Natural killer cell (primary cell): ENCODE measurements at regions of chr5 and their contacts with region 1.

Region 1: GRCh38 chr5:59356813-59357380 is 536.6 kb downstream of the PDE4D start:
- DNase-seq: peak; percentile 19 to 52
- ATAC-seq: peak; percentile 68 to 82 (median 74)
- H3K4me3 ChIP-seq: no peak overlapping the region
- H3K4me3 Mint-ChIP-seq: peak overlapping the region; percentile 85
- H3K27ac ChIP-seq: peak overlapping the region; percentile 93
- H3K27ac Mint-ChIP-seq: peak overlapping the region; percentile 95
- H3K4me1 ChIP-seq: peaks cover 15% of the 10 kb centered on the region
- H3K4me1 Mint-ChIP-seq: peaks cover 54% of the 10 kb centered on the region in 2 donors
- H3K27me3 ChIP-seq: no peaks in the 10 kb centered on the region
- H3K27me3 Mint-ChIP-seq: no peaks in the 10 kb centered on the region
- CTCF ChIP-seq: no peak

Region 2: GRCh38 chr5:59099270-59099994 is 257.5 kb before region 1 on chr5:
- intact Hi-C with region 1: loop called (anchors 1 kb)
- DNase-seq: peak; percentile 42 to 84
- ATAC-seq: peak; percentile 88 to 97 (median 96)
- H3K4me3 ChIP-seq: no peak overlapping the region
- H3K4me3 Mint-ChIP-seq: peak overlapping the region; percentile 63
- H3K27ac ChIP-seq: peak overlapping the region; percentile 86
- H3K27ac Mint-ChIP-seq: peak overlapping the region; percentile 88 to 94
- H3K4me1 ChIP-seq: peaks cover 16% of the 10 kb centered on the region
- H3K4me1 Mint-ChIP-seq: peaks cover 43 to 46% of the 10 kb centered on the region in 2 donors
- H3K27me3 ChIP-seq: no peaks in the 10 kb centered on the region
- H3K27me3 Mint-ChIP-seq: no peaks in the 10 kb centered on the region
- CTCF ChIP-seq: no peak

Region 3: DNA sequence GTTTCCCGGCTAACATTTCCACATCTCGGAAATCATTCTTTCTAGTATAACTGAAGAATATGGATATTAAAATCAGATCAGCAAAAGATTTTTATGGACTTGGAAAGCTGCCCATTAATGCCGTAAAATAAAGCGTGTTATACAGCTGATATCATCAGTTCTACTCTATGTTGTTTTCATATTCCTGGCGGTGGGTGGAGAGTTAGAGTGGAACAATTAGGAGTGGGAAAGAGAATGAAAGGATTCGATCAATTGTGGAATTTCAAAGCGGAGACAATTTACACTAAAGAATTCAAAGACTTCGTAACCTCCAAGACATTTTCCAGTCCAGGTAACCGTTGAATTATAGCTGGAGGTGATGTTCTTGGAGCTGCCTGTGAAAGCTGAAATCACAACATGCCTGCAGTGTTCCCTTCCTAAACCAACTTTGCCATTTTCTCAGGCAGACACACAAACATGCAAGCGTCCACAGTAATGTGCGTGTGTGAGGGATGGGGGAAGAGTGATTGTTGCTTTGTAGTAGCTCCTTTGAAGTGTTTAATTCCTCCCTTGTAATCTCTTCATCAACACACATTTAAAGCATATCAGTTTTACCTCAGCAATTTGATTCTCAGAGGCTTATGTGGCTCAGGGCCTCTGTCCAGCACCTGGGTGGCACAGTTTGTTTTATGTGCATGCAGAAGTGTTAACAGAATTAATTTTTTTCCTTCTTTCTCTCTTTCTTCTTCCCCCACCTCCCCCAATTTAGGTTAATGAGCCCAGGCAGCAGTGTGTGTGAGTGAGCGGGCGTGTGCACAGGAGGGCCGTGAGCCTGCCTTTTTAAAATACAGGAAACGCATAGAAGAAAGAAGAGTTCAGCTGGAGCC is 230.0 kb before region 1 on chr5:
- intact Hi-C with region 1: loop called (anchors 1 kb)
- DNase-seq: peak in 1 of 2 donors; percentile 76
- ATAC-seq: no peak
- H3K4me3 ChIP-seq: peak overlapping the region; percentile 17
- H3K4me3 Mint-ChIP-seq: no peak overlapping the region
- H3K27ac ChIP-seq: peak overlapping the region; percentile 80
- H3K27ac Mint-ChIP-seq: no peak overlapping the region
- H3K4me1 ChIP-seq: peaks cover 26% of the 10 kb centered on the region
- H3K4me1 Mint-ChIP-seq: peaks cover 0 to 5% of the 10 kb centered on the region in 2 donors
- H3K27me3 ChIP-seq: no peaks in the 10 kb centered on the region
- H3K27me3 Mint-ChIP-seq: no peaks in the 10 kb centered on the region
- CTCF ChIP-seq: no peak

Region 4: DNA sequence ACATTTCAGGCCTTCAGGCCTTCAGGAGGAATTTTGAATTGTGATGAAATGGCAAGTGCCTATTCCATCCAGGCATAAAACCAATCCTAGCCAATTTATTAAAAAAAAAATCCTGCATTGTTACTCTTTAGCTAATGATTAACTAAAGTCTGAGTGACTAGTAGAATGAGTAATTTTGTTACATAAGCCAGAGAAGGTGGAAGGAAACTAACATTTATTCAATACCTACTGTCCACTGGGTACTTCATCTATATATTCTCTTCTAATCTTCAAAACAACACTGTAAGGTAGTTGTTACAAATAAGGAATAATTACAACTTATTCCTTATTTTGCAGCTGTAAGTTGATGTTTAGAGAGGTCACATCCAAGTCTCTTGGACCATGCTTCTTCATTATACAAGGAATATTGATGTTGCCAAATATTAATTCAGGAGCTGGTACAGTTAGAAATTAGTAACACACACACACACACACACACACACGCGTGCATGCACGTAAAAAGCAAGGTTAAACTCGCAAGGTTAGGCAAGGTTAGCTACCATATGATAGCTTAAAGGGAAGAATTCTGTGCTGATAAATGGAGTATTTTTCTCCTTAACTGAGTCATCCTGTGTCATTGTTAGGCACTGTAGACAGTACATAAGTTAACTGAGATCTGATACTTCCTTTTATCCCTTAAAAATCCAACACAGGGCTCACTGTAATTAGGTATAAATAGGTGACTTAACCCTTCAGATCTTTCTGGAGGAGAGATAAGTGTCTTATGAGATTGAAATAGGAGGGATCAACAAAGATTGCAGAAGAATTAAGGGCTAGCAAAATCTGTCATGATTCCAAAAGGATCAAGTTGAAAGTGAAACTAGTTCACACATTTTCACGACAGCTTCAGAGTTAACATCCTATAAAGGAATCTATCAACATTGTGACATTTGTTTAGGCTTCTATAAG is 60.3 kb before region 1 on chr5:
- intact Hi-C with region 1: loop called (anchors 5 kb)
- DNase-seq: peak in 1 of 2 donors; percentile 12
- ATAC-seq: peak; percentile 27 to 74 (median 38)
- H3K4me3 ChIP-seq: peak overlapping the region; percentile 13
- H3K4me3 Mint-ChIP-seq: peak overlapping the region; percentile 75
- H3K27ac ChIP-seq: no peak overlapping the region
- H3K27ac Mint-ChIP-seq: peak overlapping the region; percentile 45 to 76
- H3K4me1 ChIP-seq: no peaks in the 10 kb centered on the region
- H3K4me1 Mint-ChIP-seq: peaks cover 18% of the 10 kb centered on the region in 2 donors
- H3K27me3 ChIP-seq: no peaks in the 10 kb centered on the region
- H3K27me3 Mint-ChIP-seq: no peaks in the 10 kb centered on the region
- CTCF ChIP-seq: no peak

Region 5: DNA sequence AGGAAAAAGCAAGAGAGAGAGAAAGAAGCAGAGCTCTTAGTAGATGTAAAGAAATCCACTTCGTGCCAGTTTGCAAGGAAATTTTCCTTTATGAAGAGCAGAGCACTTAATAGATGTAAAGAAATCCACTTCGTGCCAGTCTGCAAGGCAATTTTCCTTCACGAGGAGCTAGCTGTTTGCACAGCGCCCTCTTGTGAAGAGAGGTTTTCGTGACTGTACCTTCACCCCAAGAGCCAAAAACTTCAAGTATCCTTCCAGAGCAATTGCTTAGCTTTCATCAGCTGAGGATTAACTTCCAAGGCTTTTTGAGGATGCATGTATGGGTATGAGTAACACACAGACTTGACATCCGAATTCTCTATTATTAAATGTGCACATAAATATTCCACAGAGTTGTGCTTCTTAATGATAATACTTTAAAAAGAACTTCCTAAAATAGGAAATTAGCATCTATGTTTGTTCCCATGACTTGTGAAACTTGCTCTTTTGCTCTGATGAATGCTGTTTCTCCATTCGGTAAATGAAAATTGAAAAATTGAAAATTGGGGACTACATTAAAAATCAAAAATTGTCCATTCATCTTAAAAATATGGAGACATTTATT is 11.0 kb after region 1 on chr5:
- intact Hi-C with region 1: loop called (anchors 1 kb)
- DNase-seq: peak; percentile 30 to 69
- ATAC-seq: peak in 2 of 3 donors; percentile 71 to 77
- H3K4me3 ChIP-seq: no peak overlapping the region
- H3K4me3 Mint-ChIP-seq: no peak overlapping the region
- H3K27ac ChIP-seq: no peak overlapping the region
- H3K27ac Mint-ChIP-seq: no peak overlapping the region
- H3K4me1 ChIP-seq: no peaks in the 10 kb centered on the region
- H3K4me1 Mint-ChIP-seq: no peaks in the 10 kb centered on the region
- H3K27me3 ChIP-seq: no peaks in the 10 kb centered on the region
- H3K27me3 Mint-ChIP-seq: peaks cover 0 to 4% of the 10 kb centered on the region in 2 donors
- CTCF ChIP-seq: peak; percentile 77